HEK293 (cell line): ENCODE measurements at regions of chr10 and their contacts with region 1.

Region 1: GRCh38 chr10:120905268-120905667 is 54.1 kb downstream of the WDR11 start:
- H3K4me3 ChIP-seq: no peak overlapping the region
- H3K27ac ChIP-seq: no peak overlapping the region
- H3K4me1 ChIP-seq: no peaks in the 10 kb centered on the region
- CTCF ChIP-seq: no peak

Region 2: DNA sequence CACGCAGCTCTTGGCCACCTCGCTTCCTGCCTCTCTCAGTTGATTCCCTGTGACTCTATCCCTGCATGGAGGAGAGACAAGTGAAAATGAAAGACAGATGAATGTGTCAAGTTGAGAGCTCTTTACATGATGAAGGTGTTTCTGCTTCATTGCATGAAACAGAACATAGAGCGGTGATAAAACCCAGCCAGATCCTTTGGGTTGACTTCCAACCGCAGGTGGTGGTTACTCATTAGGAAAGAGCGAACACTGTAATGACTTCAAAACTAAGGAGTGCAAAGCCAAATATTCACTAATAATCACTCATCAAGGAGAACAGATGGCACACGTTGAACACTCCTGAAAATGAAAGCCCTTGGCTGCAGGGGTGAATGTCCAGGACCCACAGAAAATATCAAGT is 85.9 kb before region 1 on chr10:
- CTCF ChIA-PET with region 1: no interaction called
- POLR2A ChIA-PET with region 1: no interaction called
- H3K4me3 ChIP-seq: no peak overlapping the region
- H3K27ac ChIP-seq: no peak overlapping the region
- H3K4me1 ChIP-seq: no peaks in the 10 kb centered on the region
- CTCF ChIP-seq: no peak

Region 3: DNA sequence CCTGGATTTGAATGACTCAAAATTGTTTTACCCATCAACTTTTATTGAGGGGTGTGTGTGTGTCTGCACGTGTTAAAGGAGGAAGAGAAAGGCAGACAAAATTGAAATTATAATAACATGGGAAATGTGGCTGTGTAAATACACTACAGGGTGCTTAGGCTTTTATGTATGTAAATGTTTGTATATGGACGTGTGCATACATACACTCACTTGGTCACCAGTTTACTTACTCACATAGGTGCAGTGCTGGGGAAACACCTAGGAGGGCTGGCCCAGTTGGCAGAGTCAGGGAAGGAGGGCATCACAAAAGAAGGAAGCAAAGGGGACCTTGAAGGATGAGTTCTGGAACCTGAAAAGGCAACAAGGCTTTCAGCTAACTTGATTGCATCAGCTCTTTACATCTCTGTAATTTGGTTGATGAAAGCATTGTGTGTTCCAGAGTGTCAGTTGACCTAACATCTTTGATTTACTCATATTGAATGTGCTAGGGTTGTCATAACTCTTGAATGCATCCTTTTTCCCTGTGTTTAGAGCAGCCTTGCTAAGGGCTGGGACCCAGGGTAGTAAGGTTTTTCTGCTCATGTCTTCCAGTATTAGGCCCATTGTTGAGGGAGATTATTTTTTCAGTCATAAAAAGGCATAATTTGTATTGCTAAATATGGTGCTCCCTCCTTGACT is 44.0 kb before region 1 on chr10:
- CTCF ChIA-PET with region 1: no interaction called
- POLR2A ChIA-PET with region 1: no interaction called
- H3K4me3 ChIP-seq: no peak overlapping the region
- H3K27ac ChIP-seq: no peak overlapping the region
- H3K4me1 ChIP-seq: no peaks in the 10 kb centered on the region
- CTCF ChIP-seq: no peak

Region 4: GRCh38 chr10:121983852-121984251 is 1078.6 kb after region 1 on chr10:
- CTCF ChIA-PET with region 1: no interaction called
- POLR2A ChIA-PET with region 1: interaction called, 12 read pairs
- H3K4me3 ChIP-seq: no peak overlapping the region
- H3K27ac ChIP-seq: no peak overlapping the region
- H3K4me1 ChIP-seq: no peaks in the 10 kb centered on the region
- CTCF ChIP-seq: no peak